PC-9 (cell line): ENCODE measurements at regions of chr1 and their contacts with region 1.

Region 1: DNA sequence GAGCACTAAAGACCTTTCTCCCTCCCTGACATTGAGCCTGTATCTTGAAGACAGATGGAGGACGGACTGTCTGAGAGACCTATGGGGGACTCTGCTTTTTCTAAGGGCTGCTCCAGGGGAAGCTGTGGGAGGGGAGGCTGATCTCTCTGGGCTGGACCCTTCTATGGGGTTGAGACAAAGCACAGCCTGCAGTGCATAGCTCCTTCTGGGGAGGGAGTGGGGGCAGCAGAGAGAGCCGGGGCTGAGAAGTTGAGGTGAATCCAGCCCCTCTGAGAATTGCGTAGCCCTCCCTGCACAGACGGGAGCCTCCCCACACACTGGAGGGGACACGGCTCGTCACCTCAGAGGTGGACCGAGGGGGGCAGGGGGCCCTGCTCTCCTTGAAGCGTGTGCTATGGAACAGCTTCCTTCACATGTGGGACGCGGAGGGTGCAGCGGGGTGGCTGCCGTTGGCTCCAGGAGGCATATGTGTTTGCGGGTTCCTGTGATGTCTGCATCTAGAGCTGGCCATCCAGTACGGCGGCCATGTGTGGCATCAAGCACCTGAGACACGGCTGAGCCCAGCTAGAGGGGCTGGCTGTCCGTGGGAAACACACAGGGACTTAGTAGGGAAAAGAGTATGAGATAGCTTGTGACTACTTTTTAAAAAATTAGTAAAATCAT is 299.1 kb downstream of the CAMTA1 start:
- DNase-seq: no peak
- H3K4me3 ChIP-seq: no peak overlapping the region
- H3K27ac ChIP-seq: no peak overlapping the region
- H3K4me1 ChIP-seq: no peaks in the 10 kb centered on the region
- H3K27me3 ChIP-seq: peaks cover 41% of the 10 kb centered on the region
- CTCF ChIP-seq: no peak

Region 2: DNA sequence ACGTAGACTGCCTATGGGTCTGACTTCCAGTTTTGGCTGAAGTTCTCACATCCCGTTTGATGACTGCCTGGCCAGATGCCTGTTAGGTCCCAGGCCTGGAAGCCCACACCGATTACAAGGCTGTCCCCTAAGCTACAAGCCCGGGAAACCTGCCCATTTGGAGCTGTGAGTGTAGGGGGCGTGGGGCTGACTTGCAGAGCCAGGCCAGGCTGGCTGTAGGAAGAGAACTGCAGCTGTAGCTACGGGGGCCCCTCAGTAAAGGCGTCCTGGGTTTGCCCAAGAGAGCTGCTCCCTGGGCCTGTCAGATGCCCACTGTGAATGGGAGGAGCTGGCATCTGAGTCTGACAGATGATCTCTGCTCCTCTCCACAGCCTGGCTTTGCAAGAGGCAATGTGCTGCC is 99.4 kb before region 1 on chr1:
- CTCF ChIA-PET with region 1: no interaction called
- POLR2A ChIA-PET with region 1: no interaction called
- intact Hi-C with region 1: no loop called
- DNase-seq: no peak
- H3K4me3 ChIP-seq: no peak overlapping the region
- H3K27ac ChIP-seq: no peak overlapping the region
- H3K4me1 ChIP-seq: no peaks in the 10 kb centered on the region
- H3K27me3 ChIP-seq: peaks cover 65% of the 10 kb centered on the region
- CTCF ChIP-seq: no peak

Region 3: DNA sequence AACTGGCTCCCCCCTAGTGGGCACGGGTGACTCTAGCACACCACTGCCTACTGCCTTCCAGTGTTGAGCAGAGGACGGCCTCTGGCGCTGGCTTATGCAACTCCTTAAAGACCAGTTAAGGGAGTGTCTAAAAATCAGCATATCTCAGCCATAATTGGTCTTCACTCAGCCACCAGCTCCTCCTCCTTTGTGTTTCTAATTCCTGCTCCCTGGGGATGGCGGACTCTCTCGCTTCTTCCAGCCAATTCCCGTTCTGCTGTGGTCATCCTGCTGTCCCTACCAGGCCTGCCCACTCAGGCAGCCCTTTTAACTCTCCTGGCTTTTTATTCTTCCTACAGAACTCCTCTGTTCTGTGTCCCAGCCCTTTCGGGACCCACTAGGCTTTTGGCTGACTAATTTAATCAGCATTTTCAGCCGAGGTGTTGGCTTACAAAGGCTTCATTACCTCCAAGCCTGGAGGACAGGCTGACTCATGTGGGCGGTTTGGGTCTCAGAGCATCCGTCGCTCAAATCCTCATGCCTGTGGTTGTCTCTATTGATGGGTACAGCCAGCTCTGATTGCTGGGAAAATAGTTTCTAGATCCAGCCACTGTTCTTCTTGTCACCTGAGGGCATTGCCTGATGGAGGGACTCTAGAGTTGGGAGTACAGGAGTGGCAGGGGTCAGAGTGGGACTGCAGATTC is 33.4 kb after region 1 on chr1:
- CTCF ChIA-PET with region 1: interaction called, 11 read pairs
- POLR2A ChIA-PET with region 1: no interaction called
- intact Hi-C with region 1: no loop called
- DNase-seq: peak; percentile 28 to 55
- H3K4me3 ChIP-seq: no peak overlapping the region
- H3K27ac ChIP-seq: no peak overlapping the region
- H3K4me1 ChIP-seq: no peaks in the 10 kb centered on the region
- H3K27me3 ChIP-seq: peaks cover 45% of the 10 kb centered on the region
- CTCF ChIP-seq: no peak

Region 4: GRCh38 chr1:7379445-7379971 is 295.1 kb after region 1 on chr1:
- CTCF ChIA-PET with region 1: no interaction called
- POLR2A ChIA-PET with region 1: no interaction called
- intact Hi-C with region 1: no loop called
- DNase-seq: no peak
- H3K4me3 ChIP-seq: no peak overlapping the region
- H3K27ac ChIP-seq: no peak overlapping the region
- H3K4me1 ChIP-seq: no peaks in the 10 kb centered on the region
- H3K27me3 ChIP-seq: peaks cover 59% of the 10 kb centered on the region
- CTCF ChIP-seq: no peak